Transverse colon (tissue), 4 donors: ENCODE measurements at regions of chr6 and their contacts with region 1.

Region 1: GRCh38 chr6:18122124-18123093 is at the start of gene NHLRC1:
- DNase-seq: peak; percentile 89
- H3K4me3 ChIP-seq: peak within 1 kb of the TSS; percentile 23 to 54 (median 38)
- H3K27ac ChIP-seq: peak within 1 kb of the TSS; percentile 57 to 74 (median 64)
- H3K4me1 ChIP-seq: peaks cover 0 to 16% (median 7%) of the 10 kb centered on the region in 4 donors
- H3K27me3 ChIP-seq: no peaks in the 10 kb centered on the region
- CTCF ChIP-seq: peak; percentile 89 to 98 (median 93)
- EP300 ChIP-seq: no peak
- POLR2A ChIP-seq: peak; percentile 49
- total RNA-seq, gene NHLRC1: 1.1 to 2.1 TPM in 2 of 4 donors, not detected in the others

Region 2: GRCh38 chr6:17831135-17831534 is 291.3 kb before region 1 on chr6:
- in situ Hi-C with region 1: loop called in 3 of 4 experiments (anchors 25 kb)
- intact Hi-C with region 1: no loop called
- DNase-seq: no peak
- H3K4me3 ChIP-seq: no peak overlapping the region
- H3K27ac ChIP-seq: no peak overlapping the region
- H3K4me1 ChIP-seq: no peaks in the 10 kb centered on the region
- H3K27me3 ChIP-seq: no peaks in the 10 kb centered on the region
- CTCF ChIP-seq: no peak
- EP300 ChIP-seq: no peak
- POLR2A ChIP-seq: no peak

Region 3: DNA sequence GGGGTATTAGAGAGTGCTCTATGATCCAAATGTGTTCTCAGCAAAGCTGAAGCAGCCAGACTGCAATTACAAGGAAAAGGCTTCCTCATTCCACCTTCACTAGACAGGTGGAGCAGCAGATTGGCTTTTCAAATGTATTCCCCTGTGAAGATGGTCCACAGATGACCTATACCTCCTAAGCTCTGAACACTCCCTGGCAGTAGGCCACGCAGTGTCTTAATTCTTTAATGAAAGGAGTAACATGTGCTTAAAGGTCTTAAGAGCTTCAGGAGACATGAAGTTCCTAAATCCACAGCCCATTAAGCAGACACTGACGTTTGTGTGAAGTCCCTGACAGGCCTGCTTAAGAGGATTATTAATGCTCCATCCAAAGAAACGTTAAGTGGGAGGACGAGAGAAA is 276.8 kb before region 1 on chr6:
- in situ Hi-C with region 1: loop called (anchors 10 to 25 kb)
- intact Hi-C with region 1: loop called (anchors 10 kb)
- DNase-seq: no peak
- H3K4me3 ChIP-seq: no peak overlapping the region
- H3K27ac ChIP-seq: no peak overlapping the region
- H3K4me1 ChIP-seq: peaks cover 0 to 18% (median 4%) of the 10 kb centered on the region in 4 donors
- H3K27me3 ChIP-seq: no peaks in the 10 kb centered on the region
- CTCF ChIP-seq: no peak
- EP300 ChIP-seq: no peak
- POLR2A ChIP-seq: no peak

Region 4: GRCh38 chr6:17987576-17988421 is 134.6 kb before region 1 on chr6 and contains the start of gene KIF13A:
- in situ Hi-C with region 1: loop called in 1 of 4 experiments (anchors 25 kb)
- intact Hi-C with region 1: loop called (anchors 10 kb)
- DNase-seq: peak; percentile 65
- H3K4me3 ChIP-seq: peak within 1 kb of the TSS; percentile 79 to 90 (median 88)
- H3K27ac ChIP-seq: peak within 1 kb of the TSS; percentile 96 to 99 (median 98)
- H3K4me1 ChIP-seq: peaks cover 7 to 38% (median 33%) of the 10 kb centered on the region in 4 donors
- H3K27me3 ChIP-seq: no peaks in the 10 kb centered on the region
- CTCF ChIP-seq: peak in 3 of 5 experiments; percentile 18 to 24 (median 18)
- EP300 ChIP-seq: no peak
- POLR2A ChIP-seq: peak; percentile 29
- total RNA-seq, gene KIF13A: 36.3 to 47.5 (median 38.1) TPM